Endothelial cell of umbilical vein (primary cell): ENCODE measurements at regions of chr3 and their contacts with region 1.

Region 1: DNA sequence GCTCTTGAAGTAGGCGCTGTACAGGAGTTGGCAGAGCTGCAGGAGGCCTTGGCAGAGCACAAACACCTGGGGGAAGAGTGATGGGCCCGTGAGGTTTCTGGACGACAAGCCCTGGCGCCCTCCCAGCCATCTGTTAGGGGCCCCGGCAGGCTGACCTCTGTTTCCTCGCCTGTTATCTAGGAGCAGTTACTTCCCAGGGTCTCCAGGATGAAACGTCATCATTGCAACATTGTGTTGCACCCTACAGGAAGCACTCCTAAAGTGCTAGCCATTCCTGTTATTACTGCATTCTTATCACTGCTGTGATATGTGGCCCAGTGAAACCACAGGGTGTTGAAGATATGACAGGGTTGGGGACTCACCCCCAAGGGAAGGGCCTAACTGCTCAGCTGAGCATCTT is 50.2 kb downstream of the SLCO2A1 start:
- DNase-seq: peak; percentile 84
- H3K4me3 ChIP-seq: no peak overlapping the region
- H3K27ac ChIP-seq: peak overlapping the region; percentile 53
- H3K4me1 ChIP-seq: peaks cover 17% of the 10 kb centered on the region
- H3K27me3 ChIP-seq: no peaks in the 10 kb centered on the region
- CTCF ChIP-seq: no peak
- POLR2A ChIP-seq: peak; percentile 57

Region 2: DNA sequence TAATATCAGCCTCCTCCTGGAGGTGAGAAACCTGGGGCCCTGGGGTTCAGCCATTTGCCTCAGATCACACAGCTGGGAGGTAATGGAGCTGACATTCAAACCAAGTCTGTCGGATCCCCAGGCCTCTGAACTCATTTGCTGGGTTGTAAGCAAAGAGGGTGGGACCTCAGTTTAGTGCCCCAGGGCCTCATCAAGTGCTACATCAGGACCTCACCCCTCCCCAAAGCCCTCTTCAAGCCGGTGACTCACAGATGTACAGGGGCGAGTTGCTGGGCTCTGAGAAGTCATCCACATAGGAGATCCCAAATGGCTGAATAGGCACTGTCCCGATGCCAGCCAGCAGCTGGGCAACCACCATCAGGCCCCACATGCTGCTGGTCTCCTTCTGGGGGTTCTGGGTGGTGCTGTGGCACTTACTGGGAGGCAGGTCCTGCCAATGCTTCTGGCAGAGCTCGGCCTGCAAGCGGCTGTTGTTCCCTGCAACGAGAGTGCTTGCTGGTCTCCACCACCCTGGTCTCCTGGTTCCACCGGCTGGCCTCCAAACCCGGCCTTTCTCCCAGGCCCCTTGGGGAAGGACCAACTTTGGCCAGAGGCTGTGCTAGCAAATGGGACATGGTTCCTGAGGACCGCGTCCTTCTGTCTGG is 24.7 kb before region 1 on chr3:
- CTCF ChIA-PET with region 1: interaction called, 5 read pairs
- POLR2A ChIA-PET with region 1: interaction called, 12 read pairs
- dilution Hi-C with region 1: no loop called
- intact Hi-C with region 1: no loop called
- DNase-seq: no peak
- H3K4me3 ChIP-seq: no peak overlapping the region
- H3K27ac ChIP-seq: no peak overlapping the region
- H3K4me1 ChIP-seq: peaks cover 6% of the 10 kb centered on the region
- H3K27me3 ChIP-seq: no peaks in the 10 kb centered on the region
- CTCF ChIP-seq: no peak
- POLR2A ChIP-seq: no peak

Region 3: GRCh38 chr3:134267996-134268395 is 288.4 kb after region 1 on chr3:
- CTCF ChIA-PET with region 1: no interaction called
- POLR2A ChIA-PET with region 1: no interaction called
- dilution Hi-C with region 1: no loop called
- intact Hi-C with region 1: no loop called
- DNase-seq: no peak
- H3K4me3 ChIP-seq: no peak overlapping the region
- H3K27ac ChIP-seq: no peak overlapping the region
- H3K4me1 ChIP-seq: no peaks in the 10 kb centered on the region
- H3K27me3 ChIP-seq: peaks cover 16 to 19% of the 10 kb centered on the region in 2 experiments
- CTCF ChIP-seq: no peak
- POLR2A ChIP-seq: no peak

Region 4: GRCh38 chr3:135348690-135349089 is 1369.1 kb after region 1 on chr3:
- CTCF ChIA-PET with region 1: no interaction called
- POLR2A ChIA-PET with region 1: no interaction called
- dilution Hi-C with region 1: no loop called
- intact Hi-C with region 1: no loop called
- DNase-seq: no peak
- H3K4me3 ChIP-seq: no peak overlapping the region
- H3K27ac ChIP-seq: no peak overlapping the region
- H3K4me1 ChIP-seq: no peaks in the 10 kb centered on the region
- H3K27me3 ChIP-seq: no peaks in the 10 kb centered on the region
- CTCF ChIP-seq: no peak
- POLR2A ChIP-seq: no peak